Activated T-helper 1 cell treated with anti-CD3 and anti-CD28 coated beads, Interleukin-12 subunit alpha, Interleukin-12 subunit beta, Interleukin-2, Interleukin-4 antibody, amounts not matched to agents 30 ng/mL and 10 ng/mL and 1 ng/mL, durations not matched to agents 14 hours and 24 hours and 36 hours (primary cell): ENCODE measurements at regions of chr1 and their contacts with region 1.

Region 1: GRCh38 chr1:84944767-84945486 is 51.9 kb upstream of the LPAR3 start:
- DNase-seq: peak; percentile 77
- H3K4me3 Mint-ChIP-seq: peak overlapping the region; percentile 81
- H3K27ac Mint-ChIP-seq: peak overlapping the region; percentile 91
- H3K4me1 Mint-ChIP-seq: peaks cover 39% of the 10 kb centered on the region
- H3K27me3 Mint-ChIP-seq: no peaks in the 10 kb centered on the region

Region 2: DNA sequence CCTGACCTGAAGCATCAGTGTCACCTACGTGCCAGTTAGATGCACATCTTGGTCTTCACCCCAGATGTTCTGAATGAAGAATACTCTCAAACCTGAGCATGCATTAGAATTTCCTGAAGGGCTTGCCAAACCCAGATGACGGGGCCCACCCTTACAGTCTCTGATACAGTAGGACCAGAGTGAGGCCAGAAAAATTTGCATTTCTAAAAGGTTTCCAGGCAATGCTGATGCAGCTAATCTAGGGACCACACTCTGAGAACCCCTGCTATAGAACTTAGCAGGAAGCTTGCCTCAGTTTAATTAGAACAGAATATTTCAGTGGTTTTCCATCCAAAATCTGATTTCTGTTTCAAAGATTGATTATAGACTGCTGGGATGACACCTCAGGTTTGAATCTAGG is 360.8 kb before region 1 on chr1:
- intact Hi-C with region 1: no loop called
- DNase-seq: no peak
- H3K4me3 Mint-ChIP-seq: no peak overlapping the region
- H3K27ac Mint-ChIP-seq: no peak overlapping the region
- H3K4me1 Mint-ChIP-seq: no peaks in the 10 kb centered on the region
- H3K27me3 Mint-ChIP-seq: peaks cover 3% of the 10 kb centered on the region

Region 3: GRCh38 chr1:84959294-84959693 is 14.4 kb after region 1 on chr1:
- intact Hi-C with region 1: loop called (anchors 1 kb)
- DNase-seq: peak; percentile 41
- H3K4me3 Mint-ChIP-seq: peak overlapping the region; percentile 27
- H3K27ac Mint-ChIP-seq: peak overlapping the region; percentile 59
- H3K4me1 Mint-ChIP-seq: peaks cover 24% of the 10 kb centered on the region
- H3K27me3 Mint-ChIP-seq: no peaks in the 10 kb centered on the region

Region 4: DNA sequence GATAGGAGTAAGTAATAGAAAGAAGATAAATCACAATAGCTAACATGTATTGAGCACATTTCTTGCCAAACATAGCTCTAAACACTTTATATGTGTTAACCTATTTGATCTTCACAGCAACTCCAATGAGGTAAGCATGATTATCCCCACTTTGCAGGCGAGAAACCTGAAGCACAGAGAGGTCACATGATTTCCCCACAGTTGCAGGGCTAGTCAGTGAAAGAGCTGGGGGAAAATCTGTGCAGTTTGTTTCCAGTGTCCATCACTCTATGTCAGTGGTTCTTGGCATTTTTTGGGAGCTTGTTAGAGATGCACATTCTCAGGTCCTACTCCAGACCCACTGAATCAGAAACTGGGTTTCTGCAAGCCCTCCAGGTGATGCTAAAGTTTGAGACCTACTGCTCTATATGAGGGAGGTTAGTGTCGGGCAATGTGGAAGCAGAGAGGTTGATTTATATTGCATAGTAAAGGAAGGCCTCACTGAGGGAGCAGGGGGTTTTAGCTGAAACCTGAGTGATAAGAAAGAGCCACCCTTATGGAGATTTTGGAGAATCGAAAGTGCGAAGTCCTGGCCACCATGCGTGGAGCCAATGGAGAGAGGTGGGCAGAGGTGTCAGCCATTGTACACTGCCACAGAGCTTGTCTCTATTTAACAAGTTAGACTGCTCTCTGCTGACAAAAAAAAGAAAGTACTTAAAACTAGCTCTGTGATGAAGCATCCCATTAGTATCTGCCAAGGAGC is 82.5 kb after region 1 on chr1:
- intact Hi-C with region 1: loop called (anchors 1 kb)
- DNase-seq: no peak
- H3K4me3 Mint-ChIP-seq: no peak overlapping the region
- H3K27ac Mint-ChIP-seq: peak overlapping the region; percentile 53
- H3K4me1 Mint-ChIP-seq: peaks cover 10% of the 10 kb centered on the region
- H3K27me3 Mint-ChIP-seq: peaks cover 6% of the 10 kb centered on the region

Region 5: DNA sequence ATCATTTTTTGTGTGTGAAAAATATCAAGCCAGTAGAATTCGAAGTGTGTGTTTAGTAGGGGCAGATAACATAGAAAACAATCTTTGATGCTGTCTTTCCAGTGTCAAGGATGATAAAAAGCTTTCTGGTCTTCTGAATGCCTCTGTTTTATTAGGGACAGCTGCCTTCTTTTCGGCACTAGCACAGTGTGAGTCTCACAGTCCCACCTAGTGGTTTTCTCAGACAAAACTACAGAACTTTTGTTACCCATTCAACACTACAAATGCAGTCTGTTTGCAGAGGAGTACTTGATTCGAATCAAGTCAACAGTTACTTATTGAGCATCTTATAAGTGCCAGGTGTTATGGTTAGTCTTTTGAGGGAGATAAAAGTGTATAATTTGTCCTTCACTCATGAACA is 134.0 kb after region 1 on chr1:
- intact Hi-C with region 1: loop called (anchors 1 kb)
- DNase-seq: no peak
- H3K4me3 Mint-ChIP-seq: no peak overlapping the region
- H3K27ac Mint-ChIP-seq: no peak overlapping the region
- H3K4me1 Mint-ChIP-seq: peaks cover 6% of the 10 kb centered on the region
- H3K27me3 Mint-ChIP-seq: peaks cover 24% of the 10 kb centered on the region

Region 6: DNA sequence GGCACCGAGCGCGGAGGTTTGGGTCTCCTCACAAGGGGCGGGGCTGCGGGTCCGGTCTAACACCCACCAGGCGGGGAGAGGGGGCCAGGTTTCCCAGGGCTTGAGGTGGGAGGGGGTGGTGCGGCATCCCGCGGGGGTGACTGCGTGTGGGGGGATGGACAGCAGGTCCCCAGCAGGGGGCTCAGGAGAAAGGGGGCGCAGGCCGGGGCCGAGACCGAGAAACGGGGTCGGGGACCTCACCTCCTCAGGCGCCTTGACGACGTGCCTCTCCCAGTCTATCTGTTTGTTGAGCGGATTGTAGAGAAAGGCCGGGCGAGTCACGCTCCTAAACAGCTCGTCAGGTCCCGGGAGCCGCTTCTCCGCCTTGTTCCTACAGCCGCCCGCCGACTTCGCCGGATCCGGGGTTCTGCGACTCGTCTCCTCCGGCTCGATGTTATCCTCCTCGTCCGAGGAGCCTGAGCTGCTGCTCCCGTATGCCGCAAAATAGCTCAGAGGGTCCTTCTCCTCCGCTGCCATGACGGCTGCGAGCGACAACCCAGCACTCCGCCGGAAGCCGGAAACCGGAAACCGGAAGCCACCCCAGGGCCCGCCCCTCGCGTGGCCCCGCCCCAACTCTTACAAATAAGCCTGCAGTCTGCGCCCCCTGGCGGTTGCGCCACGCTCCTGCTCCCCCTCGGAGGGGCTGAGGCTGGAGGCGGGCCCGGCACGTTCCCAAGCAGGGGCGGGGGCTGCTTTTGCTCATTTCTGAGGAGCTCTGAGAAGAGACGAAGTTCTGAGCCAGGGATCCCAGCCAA is 314.4 kb after region 1 on chr1 and contains the start of gene C1orf52:
- intact Hi-C with region 1: loop called (anchors 1 kb)
- DNase-seq: peak; percentile 96
- H3K4me3 Mint-ChIP-seq: peak within 1 kb of the TSS; percentile 96
- H3K27ac Mint-ChIP-seq: peak within 1 kb of the TSS; percentile 90
- H3K4me1 Mint-ChIP-seq: peaks cover 40% of the 10 kb centered on the region
- H3K27me3 Mint-ChIP-seq: no peaks in the 10 kb centered on the region
- total RNA-seq, gene C1orf52: 30.9 and 31.6 TPM in 2 replicates